Activated naive CD4-positive, alpha-beta T cell treated with anti-CD3 and anti-CD28 coated beads for 36 hours (primary cell): ENCODE measurements at regions of chrX and their contacts with region 1.

Region 1: DNA sequence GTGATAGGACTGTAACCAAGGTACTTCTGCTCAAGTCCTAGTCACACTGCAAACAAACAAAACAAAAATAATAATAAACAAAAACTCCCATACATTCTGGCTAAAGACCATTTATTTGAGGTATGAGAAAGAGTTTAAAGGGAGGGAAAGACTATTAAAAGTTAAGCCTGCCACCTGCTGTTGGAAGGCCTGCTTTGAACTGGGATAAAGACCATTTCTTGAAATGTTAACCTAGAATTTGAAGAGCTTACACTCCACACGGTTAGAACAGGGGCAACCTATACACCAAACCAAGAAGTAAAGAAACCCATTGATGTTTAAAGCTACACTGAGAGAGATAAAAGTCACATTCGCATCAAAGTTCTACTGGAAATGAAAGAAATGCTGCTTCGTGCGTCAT is 548.7 kb upstream of the DIPK2B start:
- DNase-seq: peak; percentile 17
- H3K4me3 Mint-ChIP-seq: no peak overlapping the region
- H3K27ac Mint-ChIP-seq: peak overlapping the region; percentile 72
- H3K4me1 Mint-ChIP-seq: peaks cover 10% of the 10 kb centered on the region
- H3K27me3 Mint-ChIP-seq: no peaks in the 10 kb centered on the region

Region 2: GRCh38 chrX:45322382-45322781 is 427.0 kb before region 1 on chrX:
- CTCF ChIA-PET with region 1: no interaction called
- intact Hi-C with region 1: loop called (anchors 2 kb)
- DNase-seq: peak; percentile 18
- H3K4me3 Mint-ChIP-seq: no peak overlapping the region
- H3K27ac Mint-ChIP-seq: no peak overlapping the region
- H3K4me1 Mint-ChIP-seq: no peaks in the 10 kb centered on the region
- H3K27me3 Mint-ChIP-seq: peaks cover 2% of the 10 kb centered on the region